Right ventricle myocardium inferior (tissue), 1 donor: ENCODE measurements at regions of chr12 and their contacts with region 1.

Region 1: GRCh38 chr12:122051231-122051876 is 27.2 kb upstream of the MLXIP start:
- DNase-seq: no peak
- ATAC-seq: peak; percentile 78

Region 2: DNA sequence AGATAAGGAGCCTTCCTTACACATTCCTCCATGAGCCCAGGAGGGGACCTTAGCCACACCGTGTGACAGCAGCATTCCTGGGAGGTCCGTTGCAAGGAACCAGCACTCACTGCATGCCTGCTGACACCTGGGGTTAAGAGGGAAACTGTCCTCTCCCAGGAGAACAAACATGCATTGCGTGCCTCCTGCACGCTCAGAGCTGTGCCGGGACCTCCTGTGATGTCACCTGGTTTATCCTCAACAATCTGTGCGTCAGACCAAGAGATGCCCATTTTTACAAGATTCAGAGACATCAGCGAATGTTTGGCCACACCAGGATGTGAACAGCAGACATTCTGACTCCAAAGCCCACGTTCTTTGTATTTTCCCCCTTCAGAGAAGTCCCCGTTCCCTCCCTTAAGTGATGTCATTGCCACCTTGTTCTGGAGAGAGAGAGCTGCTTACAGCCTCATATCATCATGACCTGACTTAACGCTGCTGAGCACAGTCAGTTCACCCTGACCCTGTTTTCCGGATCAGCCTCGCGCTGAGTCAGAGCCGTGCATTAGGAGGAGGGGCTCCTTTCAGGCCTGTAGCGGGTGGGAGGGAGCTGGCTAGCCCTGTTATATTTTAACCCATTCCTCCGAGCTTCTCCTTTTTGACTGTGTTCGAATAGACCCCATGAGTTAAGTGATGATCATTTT is 302.6 kb before region 1 on chr12:
- intact Hi-C with region 1: no loop called
- DNase-seq: peak; percentile 43
- ATAC-seq: peak; percentile 72

Region 3: GRCh38 chr12:121917979-121918678 is 133.2 kb before region 1 on chr12 and contains the start of gene CFAP251:
- intact Hi-C with region 1: loop called (anchors 5 kb)
- DNase-seq: peak; percentile 99
- ATAC-seq: peak; percentile 89
- total RNA-seq, gene CFAP251: 1.3 TPM

Region 4: GRCh38 chr12:122021822-122022526 is 29.4 kb before region 1 on chr12 and contains the start of gene BCL7A:
- intact Hi-C with region 1: no loop called
- DNase-seq: peak; percentile 87
- ATAC-seq: peak; percentile 81
- total RNA-seq, gene BCL7A: 15.8 TPM

Region 5: GRCh38 chr12:122189626-122190475 is 138.5 kb after region 1 on chr12:
- intact Hi-C with region 1: loop called (anchors 5 kb)
- DNase-seq: no peak
- ATAC-seq: no peak